Activated CD4-positive, alpha-beta T cell treated with anti-CD3 and anti-CD28 coated beads, Interleukin-2, amount 10 ng/mL, durations not matched to agents 24 days and 14 days (primary cell): ENCODE measurements at regions of chr20 and their contacts with region 1.

Region 1: DNA sequence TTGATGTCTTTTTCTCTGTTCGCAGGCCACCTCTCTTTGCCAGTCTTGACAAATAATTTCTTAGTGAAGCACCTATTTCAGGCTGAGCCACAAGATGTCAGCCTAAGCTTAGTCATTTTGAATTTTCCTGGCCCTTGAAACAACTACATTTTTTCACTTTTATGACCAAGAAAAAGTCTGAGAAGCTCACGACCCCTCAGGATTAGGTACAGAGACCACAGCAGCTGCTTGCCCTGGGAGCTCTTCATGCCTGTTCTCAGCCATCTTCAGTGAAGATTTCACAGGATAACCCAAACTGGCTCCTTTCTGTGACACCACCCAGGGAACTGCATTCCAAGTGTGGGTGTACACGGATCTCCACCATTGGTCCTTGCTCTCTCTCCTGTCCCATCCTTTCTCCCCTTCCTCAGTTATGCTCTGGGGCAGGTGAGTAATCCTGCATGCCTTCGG is 38.4 kb upstream of the SPTLC3 start:
- DNase-seq: peak; percentile 61
- H3K4me3 Mint-ChIP-seq: no peak overlapping the region
- H3K27ac Mint-ChIP-seq: no peak overlapping the region
- H3K4me1 Mint-ChIP-seq: no peaks in the 10 kb centered on the region
- H3K27me3 Mint-ChIP-seq: peaks cover 5% of the 10 kb centered on the region

Region 2: GRCh38 chr20:12649234-12649633 is 321.2 kb before region 1 on chr20:
- intact Hi-C with region 1: no loop called
- DNase-seq: no peak
- H3K4me3 Mint-ChIP-seq: no peak overlapping the region
- H3K27ac Mint-ChIP-seq: no peak overlapping the region
- H3K4me1 Mint-ChIP-seq: no peaks in the 10 kb centered on the region
- H3K27me3 Mint-ChIP-seq: no peaks in the 10 kb centered on the region

Region 3: DNA sequence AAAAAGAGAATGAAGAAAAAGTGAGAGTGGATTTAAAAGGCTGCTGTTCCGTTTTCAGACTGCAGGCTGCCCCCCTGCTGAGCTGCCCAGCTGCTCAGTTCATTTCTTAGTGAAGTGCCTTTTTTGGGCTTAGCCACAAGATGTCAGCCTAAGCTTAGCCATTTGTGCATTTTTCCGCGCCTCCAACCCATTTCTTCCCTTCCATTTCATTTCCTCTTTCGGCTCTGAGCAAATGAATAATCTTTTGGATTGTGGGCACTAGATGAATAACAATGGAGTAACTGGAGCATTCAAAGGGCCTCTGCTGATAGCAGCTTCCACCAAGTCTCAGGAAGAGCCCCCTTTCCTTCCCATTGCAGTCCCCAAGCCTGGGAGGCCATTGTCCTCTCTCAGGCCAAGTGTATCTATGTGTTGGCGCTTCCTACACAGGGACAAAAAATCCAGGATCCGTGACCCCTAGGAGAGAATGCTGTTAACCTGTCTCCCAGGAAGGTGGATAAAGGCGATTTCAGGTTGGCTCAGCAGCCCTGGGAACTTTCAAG is 45.1 kb before region 1 on chr20:
- intact Hi-C with region 1: loop called (anchors 1 kb)
- DNase-seq: peak; percentile 74
- H3K4me3 Mint-ChIP-seq: no peak overlapping the region
- H3K27ac Mint-ChIP-seq: no peak overlapping the region
- H3K4me1 Mint-ChIP-seq: peaks cover 4% of the 10 kb centered on the region
- H3K27me3 Mint-ChIP-seq: peaks cover 2% of the 10 kb centered on the region

Region 4: DNA sequence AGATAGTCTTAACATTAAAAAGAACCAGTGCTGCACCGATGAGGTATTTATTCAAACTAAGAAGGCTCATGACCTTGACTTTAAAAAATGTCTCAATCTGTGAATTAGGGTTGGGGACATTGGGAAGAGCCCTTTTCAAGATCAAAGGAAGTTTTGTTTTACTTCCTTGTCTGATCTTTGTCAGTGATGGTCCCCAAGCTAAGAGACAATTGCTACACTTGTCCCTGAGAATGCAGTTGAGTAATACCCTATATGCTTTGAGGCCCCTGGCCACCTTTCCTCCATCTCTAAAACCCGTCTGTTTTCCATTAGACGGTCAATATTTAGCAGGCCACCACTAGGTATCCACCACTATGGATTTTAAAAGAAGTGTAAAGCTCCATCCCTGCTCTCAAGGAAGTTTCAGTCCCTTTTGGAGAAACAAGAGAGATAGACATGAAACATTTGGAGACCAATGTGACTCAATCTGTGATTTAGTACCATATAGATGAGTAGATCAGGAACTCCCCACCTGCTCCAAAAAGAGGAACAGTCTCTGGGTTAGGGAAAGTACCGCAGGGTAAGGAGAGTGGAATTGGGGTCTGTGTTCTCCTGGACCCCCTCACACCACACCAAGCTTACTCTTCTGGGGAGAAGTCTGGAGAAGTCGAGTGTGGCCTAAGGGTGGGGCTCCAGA is 151.6 kb after region 1 on chr20:
- intact Hi-C with region 1: no loop called
- DNase-seq: no peak
- H3K4me3 Mint-ChIP-seq: no peak overlapping the region
- H3K27ac Mint-ChIP-seq: no peak overlapping the region
- H3K4me1 Mint-ChIP-seq: no peaks in the 10 kb centered on the region
- H3K27me3 Mint-ChIP-seq: no peaks in the 10 kb centered on the region

Region 5: DNA sequence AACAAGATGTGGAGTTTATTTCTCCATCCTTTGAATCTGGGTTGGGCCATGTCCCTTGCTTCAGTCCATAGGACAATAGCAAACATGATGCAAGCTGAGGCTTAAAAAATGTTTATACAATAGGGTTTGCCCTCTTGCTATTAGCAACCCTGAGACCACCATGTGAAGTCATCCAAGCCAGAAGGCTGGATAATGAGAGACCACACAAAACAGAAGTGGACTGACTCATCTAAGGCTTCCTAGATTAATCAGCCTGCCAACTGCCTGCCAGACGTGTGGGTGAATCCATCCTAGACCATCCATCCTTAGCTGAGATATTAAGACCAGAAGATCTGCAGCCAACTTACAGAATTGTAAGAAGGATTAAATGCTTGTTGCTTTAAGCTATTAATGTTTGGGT is 212.6 kb after region 1 on chr20:
- intact Hi-C with region 1: no loop called
- DNase-seq: no peak
- H3K4me3 Mint-ChIP-seq: no peak overlapping the region
- H3K27ac Mint-ChIP-seq: no peak overlapping the region
- H3K4me1 Mint-ChIP-seq: no peaks in the 10 kb centered on the region
- H3K27me3 Mint-ChIP-seq: peaks cover 2% of the 10 kb centered on the region